CD14-positive monocyte (primary cell): ENCODE measurements at regions of chr1 and their contacts with region 1.

Region 1: DNA sequence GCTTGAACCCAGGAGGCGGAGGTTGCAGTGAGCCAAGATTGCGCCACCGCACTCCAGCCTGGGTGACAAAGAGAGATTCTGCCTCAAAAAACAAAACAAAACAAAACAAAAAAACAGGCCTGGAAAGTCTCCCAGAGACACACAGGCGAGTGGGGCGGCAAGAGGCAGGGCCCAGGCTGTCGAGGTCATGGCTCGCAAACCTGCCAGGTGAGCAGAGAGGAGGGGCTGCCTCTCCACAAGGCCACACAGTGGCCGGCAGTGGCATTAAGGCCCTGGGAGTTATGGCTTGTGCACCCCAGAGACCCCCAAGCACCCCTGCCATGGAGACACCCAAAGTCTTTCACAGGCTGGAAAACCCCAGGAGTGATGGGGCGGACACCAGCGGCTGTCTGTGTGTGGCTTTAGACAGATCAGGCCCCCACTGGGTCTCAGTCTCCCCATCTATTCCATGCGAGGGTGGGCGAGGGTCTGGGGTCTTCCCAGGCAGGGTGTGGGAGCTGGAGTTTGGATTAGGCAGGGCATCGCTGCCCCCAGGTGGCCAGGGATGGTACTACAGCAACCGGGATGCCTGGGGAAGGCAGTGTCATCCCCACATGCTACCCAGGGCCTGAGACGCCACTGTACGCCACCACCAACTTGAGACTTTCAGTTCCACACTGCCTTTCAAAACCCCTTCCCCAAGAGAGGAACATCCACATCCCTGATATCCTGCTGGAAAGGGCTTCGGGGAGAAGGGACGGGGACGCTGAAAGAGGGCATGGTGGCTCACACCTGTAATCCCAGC is 7.3 kb upstream of the CTRC start:
- DNase-seq: peak; percentile 69 to 77 (median 70)
- H3K4me3 ChIP-seq: no peak overlapping the region
- H3K4me3 Mint-ChIP-seq: no peak overlapping the region
- H3K27ac ChIP-seq: peak overlapping the region; percentile 76 to 84
- H3K27ac Mint-ChIP-seq: peak overlapping the region; percentile 91 to 97 (median 96)
- H3K4me1 ChIP-seq: peaks cover 33 to 81% of the 10 kb centered on the region in 2 donors
- H3K4me1 Mint-ChIP-seq: peaks cover 66% of the 10 kb centered on the region
- H3K27me3 ChIP-seq: no peaks in the 10 kb centered on the region
- H3K27me3 Mint-ChIP-seq: peaks cover 0 to 1% (median 0%) of the 10 kb centered on the region in 3 donors
- CTCF ChIP-seq: peak; percentile 99

Region 2: GRCh38 chr1:15323351-15323988 is 107.5 kb before region 1 on chr1:
- intact Hi-C with region 1: loop called (anchors 2 to 5 kb)
- DNase-seq: peak; percentile 69 to 76 (median 73)
- H3K4me3 ChIP-seq: no peak overlapping the region
- H3K4me3 Mint-ChIP-seq: no peak overlapping the region
- H3K27ac ChIP-seq: no peak overlapping the region
- H3K27ac Mint-ChIP-seq: no peak overlapping the region
- H3K4me1 ChIP-seq: peaks cover 6 to 8% of the 10 kb centered on the region in 2 donors
- H3K4me1 Mint-ChIP-seq: peaks cover 15% of the 10 kb centered on the region
- H3K27me3 ChIP-seq: no peaks in the 10 kb centered on the region
- H3K27me3 Mint-ChIP-seq: peaks cover 7 to 10% (median 8%) of the 10 kb centered on the region in 3 donors
- CTCF ChIP-seq: peak; percentile 92

Region 3: DNA sequence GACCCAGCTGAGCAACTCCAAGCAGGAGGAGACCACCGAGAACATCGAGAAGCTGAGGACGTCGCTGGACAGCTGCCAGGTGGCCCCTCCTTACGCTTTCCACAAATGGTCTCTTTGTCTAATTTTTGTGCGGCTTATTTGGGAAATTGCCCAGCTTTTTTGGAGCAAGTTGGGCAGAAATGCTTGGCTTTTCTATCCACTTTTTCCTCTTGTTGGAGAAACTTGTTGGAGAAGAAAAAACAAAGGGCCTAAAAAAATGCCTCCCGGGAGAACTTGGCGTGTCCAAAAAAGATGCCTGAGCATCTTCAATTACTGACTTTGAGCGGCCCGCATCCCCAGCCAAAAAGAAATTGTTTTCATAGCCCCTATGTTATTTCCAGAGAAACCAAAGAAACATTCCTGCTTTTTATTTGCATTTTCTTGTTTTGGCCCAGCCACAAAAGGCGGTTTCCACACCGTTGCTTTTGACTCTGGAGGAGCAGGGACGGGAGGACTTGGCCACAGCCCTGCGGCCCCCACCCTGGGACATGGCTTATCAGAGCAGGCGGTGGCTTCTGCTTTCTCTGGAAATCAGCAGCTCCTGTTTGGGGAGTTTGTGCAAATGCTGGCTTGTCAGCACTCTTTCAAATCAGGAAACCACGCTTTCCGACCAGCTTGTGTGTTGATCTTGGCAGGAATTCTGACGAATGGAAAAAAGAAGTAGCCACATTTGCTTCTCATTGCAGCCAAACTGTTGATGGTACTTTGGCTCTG is 102.5 kb before region 1 on chr1:
- intact Hi-C with region 1: loop called (anchors 2 to 5 kb)
- DNase-seq: no peak
- H3K4me3 ChIP-seq: no peak overlapping the region
- H3K4me3 Mint-ChIP-seq: peak overlapping the region in 1 of 2 donors; percentile 59
- H3K27ac ChIP-seq: no peak overlapping the region
- H3K27ac Mint-ChIP-seq: peak overlapping the region in 1 of 7 donors; percentile 10
- H3K4me1 ChIP-seq: peaks cover 16 to 19% of the 10 kb centered on the region in 2 donors
- H3K4me1 Mint-ChIP-seq: peaks cover 27% of the 10 kb centered on the region
- H3K27me3 ChIP-seq: no peaks in the 10 kb centered on the region
- H3K27me3 Mint-ChIP-seq: peaks cover 9 to 21% (median 20%) of the 10 kb centered on the region in 3 donors
- CTCF ChIP-seq: no peak

Region 4: DNA sequence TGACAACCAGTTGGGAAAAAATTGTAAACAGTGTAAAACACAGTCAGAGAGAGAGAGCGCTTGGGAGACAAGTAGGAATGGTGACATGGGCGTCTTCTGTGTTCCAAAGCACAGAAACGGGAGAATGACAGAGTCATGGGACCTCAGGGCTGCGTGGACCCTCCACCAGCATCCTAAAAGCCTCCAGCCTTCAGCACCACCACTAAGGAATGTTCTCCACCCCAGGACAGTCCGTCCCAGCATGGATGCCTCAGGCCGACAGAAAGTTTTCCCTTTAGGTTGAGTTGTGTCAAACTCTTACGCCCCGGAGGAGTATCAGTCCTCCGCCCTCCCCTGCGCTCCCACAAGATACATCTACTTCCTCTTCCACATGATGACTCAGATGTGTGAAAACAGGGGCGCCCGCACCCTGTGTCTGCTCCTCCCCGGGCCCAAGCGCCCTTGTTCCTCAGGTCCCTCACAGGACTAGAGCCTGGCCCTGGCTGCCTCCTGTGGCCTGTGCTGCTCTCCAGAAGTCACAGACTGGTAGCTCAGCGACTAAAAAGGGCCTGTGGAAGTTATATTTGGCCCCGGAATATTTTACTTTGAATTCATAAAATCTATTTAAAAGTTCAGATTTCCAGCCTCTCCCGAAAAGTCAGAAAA is 85.1 kb before region 1 on chr1:
- intact Hi-C with region 1: loop called in 1 of 2 experiments (anchors 5 kb)
- DNase-seq: peak; percentile 92 to 95 (median 95)
- H3K4me3 ChIP-seq: peak overlapping the region in 1 of 3 experiments; percentile 61
- H3K4me3 Mint-ChIP-seq: peak overlapping the region; percentile 48 to 85
- H3K27ac ChIP-seq: peak overlapping the region; percentile 68 to 80
- H3K27ac Mint-ChIP-seq: peak overlapping the region; percentile 87 to 94 (median 93)
- H3K4me1 ChIP-seq: peaks cover 63 to 66% of the 10 kb centered on the region in 2 donors
- H3K4me1 Mint-ChIP-seq: peaks cover 62% of the 10 kb centered on the region
- H3K27me3 ChIP-seq: no peaks in the 10 kb centered on the region
- H3K27me3 Mint-ChIP-seq: peaks cover 2 to 17% (median 4%) of the 10 kb centered on the region in 3 donors
- CTCF ChIP-seq: no peak

Region 5: DNA sequence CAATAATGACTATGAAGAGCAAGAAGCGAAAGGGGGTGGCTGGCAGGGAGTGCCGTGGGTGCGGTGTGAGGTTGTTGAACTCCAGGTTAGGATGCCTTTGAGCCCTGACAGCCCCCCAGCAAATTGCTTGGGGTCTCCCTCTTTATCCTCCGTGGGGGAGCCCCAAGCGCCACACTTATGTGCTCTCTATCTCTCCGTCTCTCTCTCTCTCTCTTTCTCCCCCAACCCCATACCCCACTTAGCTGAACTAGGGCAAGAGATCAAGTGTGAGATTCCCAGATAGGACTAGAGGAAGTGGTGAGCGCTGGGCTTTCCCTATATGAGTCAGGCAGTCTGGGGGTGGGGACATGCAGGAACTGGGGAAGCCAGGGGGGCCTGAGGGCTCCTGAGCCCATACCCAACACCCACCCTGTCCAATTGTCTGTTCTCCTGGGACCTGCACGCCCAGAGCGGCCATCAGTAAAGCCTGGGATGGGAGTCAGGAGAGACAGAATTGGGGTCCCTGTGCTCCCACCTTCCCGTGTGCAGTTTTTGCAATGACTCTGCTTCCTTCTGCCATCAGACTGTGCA is 13.5 kb before region 1 on chr1:
- intact Hi-C with region 1: loop called in 1 of 2 experiments (anchors 2 kb)
- DNase-seq: peak; percentile 87 to 96 (median 94)
- H3K4me3 ChIP-seq: peak overlapping the region; percentile 13 to 100 (median 25)
- H3K4me3 Mint-ChIP-seq: peak overlapping the region; percentile 77 to 87
- H3K27ac ChIP-seq: peak overlapping the region; percentile 95
- H3K27ac Mint-ChIP-seq: peak overlapping the region; percentile 98 to 99 (median 99)
- H3K4me1 ChIP-seq: peaks cover 94 to 100% of the 10 kb centered on the region in 2 donors
- H3K4me1 Mint-ChIP-seq: peaks cover 89% of the 10 kb centered on the region
- H3K27me3 ChIP-seq: no peaks in the 10 kb centered on the region
- H3K27me3 Mint-ChIP-seq: peaks cover 0 to 2% (median 2%) of the 10 kb centered on the region in 3 donors
- CTCF ChIP-seq: no peak